ENCODE measurements at regions of chr13 and their contacts with region 1.

Region 1: GRCh38 chr13:100347941-100348340 is 240.6 kb downstream of the GGACT start:
- DNase-seq: peak; percentile 66
- H3K4me3 ChIP-seq: no peak overlapping the region
- H3K27ac ChIP-seq: no peak overlapping the region
- H3K4me1 ChIP-seq: no peaks in the 10 kb centered on the region
- H3K27me3 ChIP-seq: no peaks in the 10 kb centered on the region
- CTCF ChIP-seq: no peak

Region 2: GRCh38 chr13:99900960-99901359 is 447.0 kb before region 1 on chr13:
- CTCF ChIA-PET with region 1: interaction called, 14 read pairs
- dilution Hi-C with region 1: no loop called
- in situ Hi-C with region 1: no loop called
- intact Hi-C with region 1: no loop called
- DNase-seq: no peak
- H3K4me3 ChIP-seq: no peak overlapping the region
- H3K27ac ChIP-seq: no peak overlapping the region
- H3K4me1 ChIP-seq: no peaks in the 10 kb centered on the region
- H3K27me3 ChIP-seq: peaks cover 11% of the 10 kb centered on the region
- CTCF ChIP-seq: no peak